ENCODE measurements at regions of chr4 and their contacts with region 1.

Region 1: DNA sequence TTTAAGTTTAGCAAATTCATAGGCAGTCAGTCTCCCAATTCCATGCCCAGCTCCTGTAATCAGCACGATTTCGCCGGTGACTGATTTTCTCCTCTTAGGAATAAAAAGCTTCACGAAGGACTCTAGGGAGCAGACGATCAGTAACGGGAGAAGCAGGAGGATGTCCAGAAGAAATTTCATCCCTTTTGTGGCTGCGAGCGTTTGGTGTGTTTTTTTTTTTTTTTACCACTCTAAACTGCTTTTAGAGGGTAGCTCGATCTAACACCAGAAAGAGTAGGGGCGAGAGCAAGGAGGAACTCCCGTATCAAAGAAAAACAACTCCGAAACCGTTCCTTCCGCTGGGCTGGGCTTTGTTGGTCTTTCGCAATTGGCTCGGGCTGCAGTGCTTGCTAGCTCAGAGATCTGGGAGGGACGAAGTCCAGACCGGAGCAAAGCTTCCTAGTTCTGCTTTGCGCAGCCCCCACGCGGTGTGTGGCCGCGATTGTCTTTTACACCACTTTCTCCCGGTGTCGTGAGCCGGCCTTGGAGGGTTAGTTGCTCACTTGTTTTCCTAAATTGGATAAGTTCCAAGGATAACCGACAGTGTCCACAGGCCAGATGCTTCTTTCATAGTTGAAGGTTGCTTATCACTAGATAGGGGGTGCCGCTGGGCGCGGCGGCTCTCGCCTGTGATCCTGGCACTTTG is at the start of gene HSD17B11:
- DNase-seq: peak; percentile 71 to 73
- H3K4me3 ChIP-seq: peak within 1 kb of the TSS; percentile 58 to 80 (median 66)
- H3K27ac ChIP-seq: peak within 1 kb of the TSS; percentile 84 to 87
- H3K4me1 ChIP-seq: no peaks in the 10 kb centered on the region
- H3K27me3 ChIP-seq: no peaks in the 10 kb centered on the region
- CTCF ChIP-seq: no peak
- POLR2A ChIP-seq: peak; percentile 28
- total RNA-seq, gene HSD17B11: 48.7 to 95.7 (median 54.1) TPM

Region 2: DNA sequence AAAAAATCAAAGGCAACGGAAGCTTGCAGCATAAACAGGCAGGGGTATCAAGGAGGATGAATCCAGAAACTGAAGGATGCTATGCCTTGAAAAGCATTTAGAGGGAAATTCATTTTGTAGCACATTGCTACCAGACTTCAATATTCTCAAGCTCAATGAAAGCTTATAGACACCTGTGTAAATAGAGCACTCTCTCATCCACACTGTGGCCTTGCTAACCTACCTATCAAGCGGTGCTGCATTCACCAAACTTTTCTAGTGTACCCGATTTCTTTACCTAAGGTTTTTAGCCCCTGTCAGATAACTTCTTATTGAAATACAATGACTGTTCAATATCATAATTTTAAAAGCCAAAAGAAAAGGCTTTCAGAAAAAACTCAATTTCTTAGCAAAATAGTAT is 48.2 kb before region 1 on chr4:
- intact Hi-C with region 1: no loop called
- DNase-seq: no peak
- H3K4me3 ChIP-seq: no peak overlapping the region
- H3K27ac ChIP-seq: no peak overlapping the region
- H3K4me1 ChIP-seq: no peaks in the 10 kb centered on the region
- H3K27me3 ChIP-seq: no peaks in the 10 kb centered on the region
- CTCF ChIP-seq: no peak
- POLR2A ChIP-seq: no peak

Region 3: GRCh38 chr4:87422104-87423052 is 31.3 kb after region 1 on chr4 and contains the start of gene NUDT9:
- intact Hi-C with region 1: loop called (anchors 1 kb)
- DNase-seq: peak; percentile 89
- H3K4me3 ChIP-seq: peak within 1 kb of the TSS; percentile 74 to 86 (median 81)
- H3K27ac ChIP-seq: peak within 1 kb of the TSS; percentile 92 to 95
- H3K4me1 ChIP-seq: peaks cover 0 to 2% of the 10 kb centered on the region in 2 donors
- H3K27me3 ChIP-seq: no peaks in the 10 kb centered on the region
- CTCF ChIP-seq: no peak
- POLR2A ChIP-seq: peak; percentile 89
- total RNA-seq, gene NUDT9: 20.5 to 38.8 (median 28.8) TPM

Region 4: GRCh38 chr4:87465739-87466366 is 74.8 kb after region 1 on chr4:
- intact Hi-C with region 1: no loop called
- DNase-seq: no peak
- H3K4me3 ChIP-seq: no peak overlapping the region
- H3K27ac ChIP-seq: no peak overlapping the region
- H3K4me1 ChIP-seq: no peaks in the 10 kb centered on the region
- H3K27me3 ChIP-seq: no peaks in the 10 kb centered on the region
- CTCF ChIP-seq: peak; percentile 13 to 68 (median 67)
- POLR2A ChIP-seq: no peak

Region 5: DNA sequence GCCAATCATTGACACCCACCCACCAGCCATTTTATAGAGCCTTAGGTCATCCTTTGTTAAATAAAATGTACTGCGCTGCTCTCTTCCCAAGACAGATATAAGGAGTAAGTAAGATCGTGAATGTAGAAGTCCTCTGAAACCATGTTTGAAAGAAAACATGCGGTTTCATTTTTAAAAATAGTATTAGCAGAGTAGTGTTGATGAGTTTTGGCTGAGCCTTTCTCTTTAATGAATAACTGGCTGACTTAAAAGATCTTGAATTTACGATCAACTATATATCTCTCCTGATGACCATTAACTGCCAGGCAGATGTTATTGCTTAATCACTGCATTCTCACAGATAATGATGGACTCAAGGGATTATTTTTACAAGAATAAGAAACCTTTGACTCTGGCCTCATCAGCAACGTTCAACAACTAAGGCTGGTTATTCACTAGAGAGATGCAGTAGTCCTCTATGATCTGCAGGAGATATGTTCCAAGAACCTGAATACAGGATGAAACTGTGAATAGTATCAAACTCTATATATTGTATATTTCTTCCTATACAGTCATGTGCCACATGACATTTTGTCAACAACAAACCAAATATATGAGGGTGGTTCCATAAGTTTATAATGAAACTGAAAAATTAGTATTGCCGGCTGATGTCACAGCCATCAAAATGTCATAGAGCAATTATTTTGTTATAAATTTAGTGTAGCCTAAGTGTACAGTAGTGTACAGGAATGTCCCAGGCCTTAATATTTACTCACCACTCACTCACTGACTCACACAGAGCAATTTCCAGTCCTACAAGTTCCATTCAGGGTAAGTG is 1585.1 kb after region 1 on chr4:
- intact Hi-C with region 1: no loop called
- DNase-seq: no peak
- H3K4me3 ChIP-seq: no peak overlapping the region
- H3K27ac ChIP-seq: no peak overlapping the region
- H3K4me1 ChIP-seq: no peaks in the 10 kb centered on the region
- H3K27me3 ChIP-seq: no peaks in the 10 kb centered on the region
- CTCF ChIP-seq: no peak
- POLR2A ChIP-seq: no peak